ENCODE measurements at regions of chrX and their contacts with region 1.

Region 1: DNA sequence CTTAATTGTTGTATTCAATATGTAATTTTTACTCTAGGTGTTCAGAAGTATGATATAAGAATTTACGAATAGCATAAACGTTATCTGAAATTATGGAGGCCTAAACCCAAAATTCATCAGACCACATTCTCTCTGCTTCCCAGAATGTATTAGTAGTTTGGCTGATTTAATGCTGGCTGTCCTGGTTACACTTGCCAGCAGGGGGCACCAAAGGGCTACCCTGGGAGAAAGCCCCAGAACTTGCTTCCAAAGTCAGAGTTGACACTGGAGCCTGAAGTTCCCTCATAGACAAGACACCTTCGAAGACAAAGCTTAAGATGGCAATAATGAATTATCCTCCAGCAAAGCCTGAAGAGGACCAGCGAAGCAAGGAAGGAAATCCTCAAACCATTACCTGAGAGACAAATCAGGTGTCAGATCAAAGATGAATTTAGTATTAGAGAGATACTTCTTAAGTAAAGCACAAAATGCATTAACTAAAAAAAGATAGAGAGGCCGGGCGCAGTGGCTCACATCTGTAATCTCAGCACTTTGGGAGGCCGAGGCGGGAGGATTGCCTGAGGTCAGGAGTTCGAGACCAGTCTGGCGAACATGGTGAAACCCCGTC is 11.3 kb upstream of the ANOS1 start:
- DNase-seq: peak; percentile 39 to 73 (median 63)
- H3K4me3 ChIP-seq: no peak overlapping the region
- H3K27ac ChIP-seq: no peak overlapping the region
- H3K4me1 ChIP-seq: no peaks in the 10 kb centered on the region
- H3K27me3 ChIP-seq: peaks cover 6% of the 10 kb centered on the region
- CTCF ChIP-seq: peak; percentile 35 to 71 (median 57)
- POLR2A ChIP-seq: no peak

Region 2: DNA sequence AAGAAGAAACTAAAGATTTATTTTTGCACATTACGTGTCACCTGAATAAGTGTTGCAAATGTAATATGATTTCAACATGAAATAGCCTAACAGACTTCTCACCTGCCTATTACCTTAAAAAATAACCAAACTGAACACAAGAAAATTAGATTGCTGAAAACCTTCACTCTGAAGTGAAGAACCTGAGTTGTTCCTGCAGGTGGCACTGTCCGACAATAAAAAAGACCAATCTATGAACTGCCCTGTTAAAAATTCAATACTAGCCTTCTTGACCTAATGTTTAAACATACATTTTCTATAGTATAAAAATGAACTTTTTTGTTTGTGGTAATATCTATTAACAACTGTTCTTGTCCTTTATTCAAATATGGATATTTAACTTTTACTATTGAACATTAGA is 746.8 kb before region 1 on chrX:
- intact Hi-C with region 1: loop called (anchors 5 to 10 kb)
- DNase-seq: peak in 6 of 7 donors; percentile 16 to 54 (median 32)
- H3K4me3 ChIP-seq: no peak overlapping the region
- H3K27ac ChIP-seq: no peak overlapping the region
- H3K4me1 ChIP-seq: no peaks in the 10 kb centered on the region
- H3K27me3 ChIP-seq: no peaks in the 10 kb centered on the region
- CTCF ChIP-seq: peak; percentile 38 to 74 (median 56)
- POLR2A ChIP-seq: no peak

Region 3: GRCh38 chrX:8364369-8365141 is 378.7 kb before region 1 on chrX:
- intact Hi-C with region 1: no loop called
- DNase-seq: peak in 2 of 7 donors; percentile 1 to 52
- H3K4me3 ChIP-seq: no peak overlapping the region
- H3K27ac ChIP-seq: no peak overlapping the region
- H3K4me1 ChIP-seq: no peaks in the 10 kb centered on the region
- H3K27me3 ChIP-seq: no peaks in the 10 kb centered on the region
- CTCF ChIP-seq: peak in 2 of 6 experiments; percentile 16
- POLR2A ChIP-seq: no peak

Region 4: DNA sequence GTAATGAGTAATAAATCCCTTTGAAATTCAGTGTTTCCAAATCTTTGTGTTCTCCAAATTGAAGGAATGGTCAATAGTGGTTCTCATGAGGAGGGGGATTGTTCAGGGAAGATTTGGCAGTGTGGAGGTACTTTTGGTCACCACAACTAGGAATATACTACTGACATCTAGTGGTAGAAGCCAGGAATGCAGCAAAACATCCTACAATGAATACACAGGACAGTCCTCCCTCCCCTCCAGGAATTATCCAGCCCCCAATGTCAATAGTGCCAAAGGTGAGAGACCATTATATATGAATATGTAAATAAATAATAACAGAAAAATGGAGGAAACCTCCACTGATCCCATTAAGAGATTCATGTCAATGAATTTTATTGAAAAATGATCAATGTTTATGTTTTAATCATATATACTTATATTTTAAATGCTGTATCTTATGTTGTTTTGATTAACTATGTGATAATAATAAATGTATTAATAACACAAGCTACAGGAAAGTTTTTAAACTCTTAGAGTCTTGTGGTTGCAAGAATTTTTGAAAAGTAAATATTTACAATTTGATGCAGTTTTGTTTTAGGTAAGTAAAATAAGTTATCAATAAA is 72.3 kb after region 1 on chrX:
- intact Hi-C with region 1: loop called in 1 of 2 experiments (anchors 10 kb)
- DNase-seq: peak in 4 of 7 donors; percentile 16 to 27 (median 18)
- H3K4me3 ChIP-seq: no peak overlapping the region
- H3K27ac ChIP-seq: no peak overlapping the region
- H3K4me1 ChIP-seq: no peaks in the 10 kb centered on the region
- H3K27me3 ChIP-seq: no peaks in the 10 kb centered on the region
- CTCF ChIP-seq: peak; percentile 42 to 81 (median 56)
- POLR2A ChIP-seq: no peak